Cardiac septum (tissue), 1 donor: ENCODE measurements at regions of chr5 and their contacts with region 1.

Region 1: DNA sequence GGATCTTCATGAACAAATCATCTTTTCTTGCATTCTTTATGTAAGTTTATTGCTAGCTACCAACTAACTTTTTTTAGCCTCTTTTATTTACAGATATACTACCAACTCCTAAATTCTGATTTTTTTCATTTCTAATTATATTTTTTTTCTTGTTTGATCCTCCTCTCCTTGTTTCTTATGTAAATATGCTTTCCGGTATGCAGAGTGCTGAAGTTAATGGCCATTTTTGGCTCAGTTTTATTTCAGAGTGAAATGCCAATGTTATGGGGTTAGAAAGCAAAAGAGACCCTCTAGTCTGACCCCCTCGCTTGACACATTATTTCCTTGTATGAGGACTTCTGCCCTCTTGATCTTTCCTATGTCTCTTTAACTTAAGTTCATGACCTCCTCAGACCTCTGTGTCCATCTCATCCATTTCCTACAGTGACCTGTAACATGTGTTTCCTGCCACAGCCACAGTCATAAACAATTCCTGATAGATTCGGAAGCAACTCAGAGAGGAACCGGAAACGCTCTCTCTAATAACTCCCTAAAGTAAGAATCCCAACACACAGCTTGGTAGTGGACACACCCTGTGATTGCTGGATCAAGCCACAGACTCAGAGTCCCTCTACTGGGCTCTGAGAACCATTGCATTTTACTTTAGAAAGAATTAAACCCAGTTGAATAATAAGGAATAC is 42.9 kb upstream of the AFAP1L1 start:
- DNase-seq: no peak

Region 2: DNA sequence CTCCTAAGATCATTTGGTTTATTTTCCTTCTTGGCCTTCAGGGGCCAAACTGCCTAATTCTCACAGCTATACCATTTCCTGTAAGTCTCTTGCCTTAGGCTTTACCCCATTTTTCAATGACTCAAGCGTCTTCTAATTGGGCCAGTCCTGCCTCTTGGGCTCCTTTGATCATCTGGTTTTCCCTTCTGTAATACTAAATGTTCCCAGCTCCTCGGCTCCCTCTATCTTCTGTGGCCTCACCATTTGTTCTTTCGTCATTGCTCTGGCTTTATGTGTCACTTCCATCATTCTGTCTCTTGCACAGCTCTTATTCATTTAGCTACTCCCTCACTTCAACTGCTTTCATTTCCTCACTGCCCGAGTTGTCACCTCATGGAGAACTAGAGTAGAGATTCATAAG is 931.0 kb before region 1 on chr5:
- intact Hi-C with region 1: no loop called
- DNase-seq: no peak

Region 3: DNA sequence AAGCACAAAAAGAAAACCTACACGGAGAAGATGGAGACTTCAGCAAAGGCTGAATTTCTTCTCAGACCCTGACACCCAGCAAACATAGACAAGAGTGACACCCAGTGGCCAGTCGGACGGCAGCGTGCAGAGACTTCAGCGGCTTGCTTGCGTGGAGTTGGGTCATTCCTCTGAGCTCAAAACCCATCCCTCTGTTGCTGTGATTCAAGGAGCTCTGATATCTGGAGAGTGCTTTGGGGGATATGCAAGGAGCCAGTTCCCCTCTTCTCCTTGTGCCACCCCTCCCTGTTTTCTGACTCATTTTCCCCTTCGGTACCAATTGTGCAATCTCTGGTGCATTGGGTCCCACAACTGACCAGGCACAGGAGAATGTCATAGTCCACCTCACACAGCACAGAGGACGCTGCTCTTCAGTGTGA is 193.4 kb before region 1 on chr5:
- intact Hi-C with region 1: no loop called
- DNase-seq: peak; percentile 89

Region 4: GRCh38 chr5:149133795-149134780 is 94.7 kb before region 1 on chr5:
- intact Hi-C with region 1: loop called (anchors 2 kb)
- DNase-seq: peak; percentile 81

Region 5: GRCh38 chr5:149141224-149141956 is 87.4 kb before region 1 on chr5 and contains the start of gene ABLIM3:
- intact Hi-C with region 1: loop called (anchors 1 kb)
- DNase-seq: peak; percentile 90
- total RNA-seq, gene ABLIM3: 118 TPM

Region 6: GRCh38 chr5:149195337-149195887 is 33.3 kb before region 1 on chr5:
- intact Hi-C with region 1: no loop called
- DNase-seq: no peak

Region 7: DNA sequence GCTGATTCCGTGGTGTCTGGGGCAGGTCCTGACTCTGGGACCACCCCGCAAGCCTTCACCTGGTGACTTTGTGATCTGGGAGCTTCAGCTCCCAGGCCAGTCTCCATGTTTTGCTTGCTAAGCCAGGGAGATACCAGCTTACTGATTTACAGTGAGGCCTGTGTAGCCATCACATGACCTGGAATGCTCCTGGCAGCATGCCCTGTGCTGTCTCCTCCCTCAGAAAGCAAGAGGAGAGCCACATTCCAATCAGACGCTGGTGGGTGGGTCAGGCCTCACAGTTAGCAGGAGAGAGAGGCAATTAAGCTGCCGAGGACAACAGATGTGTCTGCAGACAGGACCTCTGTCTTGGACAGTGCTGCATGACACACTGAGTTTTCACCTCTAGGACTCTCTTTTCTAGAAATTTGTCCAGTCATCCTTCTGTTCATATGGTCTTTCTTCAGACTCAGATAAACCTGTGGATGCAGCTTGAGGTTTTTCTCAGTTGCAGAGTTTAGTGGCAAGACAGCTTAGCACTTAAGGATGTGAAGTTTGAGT is 92.1 kb after region 1 on chr5:
- intact Hi-C with region 1: no loop called
- DNase-seq: peak; percentile 90